ENCODE measurements at regions of chr6 and their contacts with region 1.

Region 1: DNA sequence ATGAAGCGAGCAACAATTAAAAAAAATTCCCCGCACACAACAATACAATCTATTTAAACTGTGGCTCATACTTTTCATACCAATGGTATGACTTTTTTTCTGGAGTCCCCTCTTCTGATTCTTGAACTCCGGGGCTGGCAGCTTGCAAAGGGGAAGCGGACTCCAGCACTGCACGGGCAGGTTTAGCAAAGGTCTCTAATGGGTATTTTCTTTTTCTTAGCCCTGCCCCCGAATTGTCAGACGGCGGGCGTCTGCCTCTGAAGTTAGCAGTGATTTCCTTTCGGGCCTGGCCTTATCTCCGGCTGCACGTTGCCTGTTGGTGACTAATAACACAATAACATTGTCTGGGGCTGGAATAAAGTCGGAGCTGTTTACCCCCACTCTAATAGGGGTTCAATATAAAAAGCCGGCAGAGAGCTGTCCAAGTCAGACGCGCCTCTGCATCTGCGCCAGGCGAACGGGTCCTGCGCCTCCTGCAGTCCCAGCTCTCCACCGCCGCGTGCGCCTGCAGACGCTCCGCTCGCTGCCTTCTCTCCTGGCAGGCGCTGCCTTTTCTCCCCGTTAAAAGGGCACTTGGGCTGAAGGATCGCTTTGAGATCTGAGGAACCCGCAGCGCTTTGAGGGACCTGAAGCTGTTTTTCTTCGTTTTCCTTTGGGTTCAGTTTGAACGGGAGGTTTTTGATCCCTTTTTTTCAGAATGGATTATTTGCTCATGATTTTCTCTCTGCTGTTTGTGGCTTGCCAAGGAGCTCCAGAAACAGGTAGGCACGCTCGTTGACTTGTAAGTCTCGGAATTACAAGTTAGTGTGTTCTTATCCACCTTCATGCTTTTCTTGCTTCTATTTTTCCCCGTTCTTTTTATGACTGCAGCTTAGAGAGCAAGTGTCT is at the start of gene EDN1:
- H3K4me3 Mint-ChIP-seq: peak within 1 kb of the TSS; percentile 83
- H3K27ac Mint-ChIP-seq: peak within 1 kb of the TSS; percentile 17
- H3K4me1 Mint-ChIP-seq: peaks cover 45% of the 10 kb centered on the region
- H3K27me3 Mint-ChIP-seq: peaks cover 44% of the 10 kb centered on the region

Region 2: DNA sequence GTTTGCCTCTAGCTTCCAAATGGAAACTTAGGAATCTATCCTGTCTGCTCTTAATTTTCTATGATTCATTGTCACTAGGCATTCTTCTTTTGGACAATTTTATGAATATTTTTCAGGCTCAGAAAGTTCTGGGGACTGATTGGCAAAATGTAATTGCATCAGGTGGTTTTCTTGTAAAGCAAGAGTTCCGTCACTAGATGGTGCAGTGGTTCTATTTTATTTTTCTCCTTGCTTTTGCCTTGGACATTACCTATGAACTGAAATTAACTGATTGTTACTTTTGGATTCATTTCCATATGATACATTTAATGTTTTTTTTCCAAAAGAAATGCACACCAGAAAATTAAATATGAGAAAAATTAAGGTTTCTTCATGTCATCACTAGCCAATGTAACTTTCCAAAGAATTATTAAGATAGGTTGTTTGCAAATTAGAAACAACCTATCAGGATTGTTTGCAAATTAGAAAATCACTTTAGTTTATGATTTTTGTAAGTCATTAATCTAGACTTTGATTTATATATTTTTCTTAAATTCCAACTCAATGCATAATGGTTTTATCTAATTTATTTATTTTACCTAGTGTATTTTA is 704.7 kb before region 1 on chr6:
- intact Hi-C with region 1: loop called (anchors 1 kb)
- H3K4me3 Mint-ChIP-seq: no peak overlapping the region
- H3K27ac Mint-ChIP-seq: no peak overlapping the region
- H3K4me1 Mint-ChIP-seq: peaks cover 18% of the 10 kb centered on the region
- H3K27me3 Mint-ChIP-seq: no peaks in the 10 kb centered on the region

Region 3: GRCh38 chr6:11865680-11866300 is 424.4 kb before region 1 on chr6:
- intact Hi-C with region 1: no loop called
- H3K4me3 Mint-ChIP-seq: no peak overlapping the region
- H3K27ac Mint-ChIP-seq: no peak overlapping the region
- H3K4me1 Mint-ChIP-seq: no peaks in the 10 kb centered on the region
- H3K27me3 Mint-ChIP-seq: no peaks in the 10 kb centered on the region

Region 4: GRCh38 chr6:12150812-12151432 is 139.3 kb before region 1 on chr6:
- intact Hi-C with region 1: loop called (anchors 1 kb)
- H3K4me3 Mint-ChIP-seq: no peak overlapping the region
- H3K27ac Mint-ChIP-seq: no peak overlapping the region
- H3K4me1 Mint-ChIP-seq: no peaks in the 10 kb centered on the region
- H3K27me3 Mint-ChIP-seq: no peaks in the 10 kb centered on the region

Region 5: DNA sequence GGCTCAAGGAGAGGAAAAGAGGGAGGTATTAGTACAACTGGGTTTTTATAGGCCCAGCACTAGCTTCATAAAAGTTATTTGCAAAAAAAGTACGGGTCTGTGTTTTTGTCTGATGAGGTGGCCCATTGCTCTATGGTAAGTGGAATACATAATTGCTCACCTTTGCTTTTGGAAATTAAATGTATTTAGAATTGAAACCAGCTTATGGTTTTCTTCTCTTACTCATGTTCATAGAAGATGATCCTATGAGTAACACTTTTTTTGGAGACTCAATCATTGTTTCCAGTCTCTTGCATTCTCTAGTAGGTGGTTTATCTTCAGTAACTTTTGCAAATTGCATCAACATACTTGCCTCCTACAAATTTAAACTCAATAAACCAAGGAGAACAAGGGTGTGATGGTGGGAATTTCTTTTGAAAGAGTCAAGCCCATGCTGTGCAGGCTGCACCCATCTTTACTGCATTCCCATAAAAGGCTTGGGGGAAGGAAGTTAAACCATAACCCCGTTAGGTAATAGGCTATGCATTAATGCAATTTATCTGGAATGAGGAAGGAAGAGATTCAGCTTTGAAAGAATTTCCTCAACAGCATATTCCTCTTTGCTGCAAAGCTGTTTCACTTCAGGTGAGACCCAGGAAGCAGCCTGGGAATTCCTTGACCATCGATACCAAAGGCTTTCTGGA is 48.5 kb before region 1 on chr6:
- intact Hi-C with region 1: loop called (anchors 5 kb)
- H3K4me3 Mint-ChIP-seq: no peak overlapping the region
- H3K27ac Mint-ChIP-seq: no peak overlapping the region
- H3K4me1 Mint-ChIP-seq: peaks cover 55% of the 10 kb centered on the region
- H3K27me3 Mint-ChIP-seq: peaks cover 17% of the 10 kb centered on the region

Region 6: DNA sequence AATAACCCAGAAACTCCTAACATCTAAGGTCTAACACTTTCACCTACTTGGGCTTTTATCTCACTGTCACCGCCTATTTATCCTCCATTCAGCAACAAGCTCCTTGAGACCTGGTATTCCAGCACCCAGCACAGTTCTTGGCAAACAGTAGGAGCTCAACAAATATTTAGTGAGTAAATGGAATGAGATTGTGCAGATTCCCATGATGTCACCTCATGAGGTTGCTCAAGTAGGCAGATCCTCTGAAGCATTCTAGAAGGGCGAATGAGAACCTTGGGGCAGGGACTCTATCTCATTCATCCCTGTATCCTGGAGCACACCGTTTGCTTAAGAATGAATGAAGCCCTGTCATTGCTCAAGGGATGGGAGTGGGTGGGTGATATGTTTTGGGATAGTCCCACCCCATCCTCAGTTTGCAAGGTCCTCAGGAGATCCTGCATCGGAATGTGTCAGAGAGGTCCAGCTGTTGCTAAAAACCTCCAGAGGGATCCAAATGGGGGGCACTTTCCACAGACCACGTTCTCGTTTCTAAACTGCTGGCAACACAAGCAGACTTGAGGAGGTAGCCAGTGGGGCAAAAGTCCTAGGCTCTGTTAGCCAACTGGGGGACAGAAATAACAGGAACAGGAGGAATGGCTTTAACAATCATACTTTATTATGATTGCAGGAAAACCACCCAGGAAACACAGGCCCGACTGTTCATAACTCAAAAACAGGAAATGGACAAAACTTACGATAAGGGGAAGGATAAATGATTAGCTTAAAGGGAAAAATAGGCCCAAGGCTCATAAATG is 42.0 kb after region 1 on chr6:
- intact Hi-C with region 1: no loop called
- H3K4me3 Mint-ChIP-seq: no peak overlapping the region
- H3K27ac Mint-ChIP-seq: no peak overlapping the region
- H3K4me1 Mint-ChIP-seq: peaks cover 22% of the 10 kb centered on the region
- H3K27me3 Mint-ChIP-seq: peaks cover 12% of the 10 kb centered on the region

Region 7: DNA sequence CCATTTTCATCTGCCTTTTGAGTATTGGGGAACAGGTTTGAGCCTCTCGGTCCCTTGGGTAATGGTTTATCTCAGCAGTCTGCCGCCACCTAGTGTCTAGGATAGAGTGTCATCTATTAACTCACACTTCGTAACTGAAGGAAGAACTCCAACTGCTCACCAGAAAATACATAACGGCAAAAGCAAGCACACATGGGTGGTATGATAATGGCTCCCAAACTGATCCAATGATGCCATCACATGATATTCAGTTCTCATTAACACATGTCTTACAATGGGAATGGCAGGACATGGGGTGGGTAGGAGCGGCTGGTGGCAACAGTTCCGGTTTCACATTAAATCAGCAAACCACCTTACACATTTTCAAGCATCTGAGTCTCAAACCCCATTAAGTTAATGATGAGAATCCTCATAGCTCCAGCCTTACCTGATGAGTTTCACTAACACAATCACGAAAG is 315.7 kb after region 1 on chr6:
- intact Hi-C with region 1: loop called (anchors 10 kb)
- H3K4me3 Mint-ChIP-seq: no peak overlapping the region
- H3K27ac Mint-ChIP-seq: no peak overlapping the region
- H3K4me1 Mint-ChIP-seq: peaks cover 7% of the 10 kb centered on the region
- H3K27me3 Mint-ChIP-seq: peaks cover 4% of the 10 kb centered on the region

Measured in dendritic cell treated with granulocyte-macrophage colony-stimulating factor and Interleukin-4, amounts not matched to agents 40 ng/mL and 50 ng/mL, for 4 days (primary cell).